Naive thymus-derived CD4-positive, alpha-beta T cell (primary cell): ENCODE measurements at regions of chr2 and their contacts with region 1.

Region 1: GRCh38 chr2:120252225-120253021 is at the start of gene RALB:
- DNase-seq: peak; percentile 95 to 99 (median 97)
- ATAC-seq: peak; percentile 95
- H3K4me3 ChIP-seq: peak within 1 kb of the TSS; percentile 81
- H3K4me3 Mint-ChIP-seq: peak within 1 kb of the TSS; percentile 94 to 100 (median 98)
- H3K27ac ChIP-seq: peak within 1 kb of the TSS; percentile 76
- H3K27ac Mint-ChIP-seq: peak within 1 kb of the TSS; percentile 87 to 98 (median 95)
- H3K4me1 ChIP-seq: peaks cover 16% of the 10 kb centered on the region in 2 donors
- H3K4me1 Mint-ChIP-seq: peaks cover 29 to 72% (median 51%) of the 10 kb centered on the region in 7 donors
- H3K27me3 ChIP-seq: no peaks in the 10 kb centered on the region
- H3K27me3 Mint-ChIP-seq: peaks cover 0 to 9% (median 4%) of the 10 kb centered on the region in 5 donors
- total RNA-seq, gene RALB: 8.7 to 119 (median 11.6) TPM

Region 2: DNA sequence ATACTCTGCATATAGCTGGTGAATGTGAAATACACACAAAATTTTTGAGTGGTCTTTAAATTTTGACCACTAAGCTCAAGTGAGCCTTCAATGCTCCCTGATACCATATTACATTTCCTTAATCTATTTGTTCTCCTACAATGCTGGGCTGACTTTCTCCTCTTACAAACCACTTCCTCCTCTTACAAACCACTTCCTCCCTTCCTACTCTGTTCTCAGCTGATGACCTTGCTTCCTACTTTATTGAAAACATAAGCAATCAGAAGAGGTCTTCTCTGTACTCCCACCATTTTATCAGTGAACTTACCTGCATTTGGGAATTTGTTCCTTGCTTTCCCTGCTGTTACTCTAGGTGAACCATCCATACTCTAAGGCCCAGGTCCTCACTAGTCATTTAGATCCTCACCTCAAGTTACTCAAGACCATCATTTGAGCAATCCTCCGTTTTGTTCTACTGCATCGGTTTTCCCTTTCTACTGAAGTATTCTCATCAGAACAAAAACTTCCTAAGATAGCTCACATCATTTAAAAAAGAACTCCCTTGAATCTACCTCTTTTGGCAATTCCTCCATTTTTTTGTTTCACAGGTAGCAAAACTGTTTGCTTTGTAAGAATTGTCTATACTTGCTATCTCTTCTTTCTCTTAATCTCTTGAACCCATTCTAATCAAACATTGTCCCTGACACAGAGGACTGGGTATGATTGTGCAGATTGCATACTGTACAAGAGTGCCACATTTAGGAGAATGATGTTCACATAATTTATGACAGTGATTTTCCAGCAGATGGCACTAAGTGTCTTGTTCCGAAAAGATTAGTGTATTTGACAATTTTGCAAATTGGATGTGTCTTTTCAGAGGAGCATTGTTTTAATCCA is 143.0 kb before region 1 on chr2:
- CTCF ChIA-PET with region 1: interaction called, 3 read pairs
- POLR2A ChIA-PET with region 1: no interaction called
- intact Hi-C with region 1: loop called in 1 of 2 experiments (anchors 1 kb)
- DNase-seq: peak in 7 of 9 donors; percentile 14 to 73 (median 67)
- ATAC-seq: peak; percentile 80
- H3K4me3 ChIP-seq: peak overlapping the region; percentile 34
- H3K4me3 Mint-ChIP-seq: peak overlapping the region; percentile 30 to 87 (median 70)
- H3K27ac ChIP-seq: peak overlapping the region; percentile 39
- H3K27ac Mint-ChIP-seq: peak overlapping the region; percentile 10 to 90 (median 72)
- H3K4me1 ChIP-seq: peaks cover 17 to 21% of the 10 kb centered on the region in 2 donors
- H3K4me1 Mint-ChIP-seq: peaks cover 19 to 44% (median 36%) of the 10 kb centered on the region in 7 donors
- H3K27me3 ChIP-seq: no peaks in the 10 kb centered on the region
- H3K27me3 Mint-ChIP-seq: peaks cover 0 to 33% (median 0%) of the 10 kb centered on the region in 5 donors

Region 3: GRCh38 chr2:120231974-120232635 is 20.3 kb before region 1 on chr2:
- CTCF ChIA-PET with region 1: interaction called, 3 read pairs
- POLR2A ChIA-PET with region 1: interaction called, 73 read pairs
- intact Hi-C with region 1: loop called (anchors 1 kb)
- DNase-seq: peak; percentile 19 to 82 (median 77)
- ATAC-seq: peak; percentile 93
- H3K4me3 ChIP-seq: peak overlapping the region; percentile 72
- H3K4me3 Mint-ChIP-seq: peak overlapping the region; percentile 86 to 100 (median 96)
- H3K27ac ChIP-seq: peak overlapping the region; percentile 81
- H3K27ac Mint-ChIP-seq: peak overlapping the region; percentile 93 to 98 (median 96)
- H3K4me1 ChIP-seq: peaks cover 19 to 29% of the 10 kb centered on the region in 2 donors
- H3K4me1 Mint-ChIP-seq: peaks cover 15 to 65% (median 59%) of the 10 kb centered on the region in 7 donors
- H3K27me3 ChIP-seq: no peaks in the 10 kb centered on the region
- H3K27me3 Mint-ChIP-seq: no peaks in the 10 kb centered on the region

Region 4: GRCh38 chr2:120294008-120294340 is 41.6 kb after region 1 on chr2:
- CTCF ChIA-PET with region 1: no interaction called
- POLR2A ChIA-PET with region 1: interaction called, 3 read pairs
- intact Hi-C with region 1: loop called (anchors 1 to 5 kb)
- DNase-seq: no peak
- ATAC-seq: no peak
- H3K4me3 ChIP-seq: no peak overlapping the region
- H3K4me3 Mint-ChIP-seq: peak overlapping the region in 1 of 10 donors; percentile 56
- H3K27ac ChIP-seq: no peak overlapping the region
- H3K27ac Mint-ChIP-seq: peak overlapping the region in 1 of 9 donors; percentile 64
- H3K4me1 ChIP-seq: peaks cover 0 to 4% of the 10 kb centered on the region in 2 donors
- H3K4me1 Mint-ChIP-seq: peaks cover 6 to 61% (median 7%) of the 10 kb centered on the region in 7 donors
- H3K27me3 ChIP-seq: no peaks in the 10 kb centered on the region
- H3K27me3 Mint-ChIP-seq: no peaks in the 10 kb centered on the region